PC-3 (cell line): ENCODE measurements at regions of chr5 and their contacts with region 1.

Region 1: GRCh38 chr5:90529194-90529938 is at the start of gene LYSMD3:
- DNase-seq: peak; percentile 99
- ATAC-seq: peak; percentile 90
- H3K4me3 ChIP-seq: peak within 1 kb of the TSS; percentile 85
- H3K27ac ChIP-seq: peak within 1 kb of the TSS; percentile 65
- H3K4me1 ChIP-seq: peaks cover 35% of the 10 kb centered on the region
- H3K27me3 ChIP-seq: no peaks in the 10 kb centered on the region
- CTCF ChIP-seq: no peak
- total RNA-seq, gene LYSMD3: 7.9 and 10.0 TPM in 2 replicates

Region 2: DNA sequence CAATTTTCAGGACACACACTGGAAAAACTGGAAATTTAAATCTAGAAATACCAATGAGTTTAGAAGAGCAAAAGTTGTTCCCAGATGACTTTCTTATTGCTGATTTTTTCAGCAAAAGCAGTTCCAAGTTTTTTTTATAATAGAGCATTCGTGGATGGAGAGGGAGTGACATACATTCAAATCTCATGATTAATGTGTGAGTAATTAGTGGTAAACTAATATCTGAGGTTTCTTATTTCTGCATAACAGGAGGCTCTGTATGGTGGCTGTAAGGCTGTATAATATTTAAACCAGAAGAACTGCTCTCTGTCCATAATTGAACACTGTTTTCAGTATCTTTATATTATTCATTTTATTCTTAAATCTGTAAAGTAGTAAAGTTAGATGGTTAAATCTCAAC is 25.8 kb before region 1 on chr5:
- CTCF ChIA-PET with region 1: interaction called, 4 read pairs
- POLR2A ChIA-PET with region 1: no interaction called
- intact Hi-C with region 1: loop called (anchors 1 kb)
- DNase-seq: peak; percentile 65
- ATAC-seq: peak; percentile 81
- H3K4me3 ChIP-seq: peak overlapping the region; percentile 34
- H3K27ac ChIP-seq: peak overlapping the region; percentile 67
- H3K4me1 ChIP-seq: peaks cover 35% of the 10 kb centered on the region
- H3K27me3 ChIP-seq: no peaks in the 10 kb centered on the region
- CTCF ChIP-seq: no peak

Region 3: GRCh38 chr5:90548069-90548593 is 18.8 kb after region 1 on chr5:
- CTCF ChIA-PET with region 1: interaction called, 3 read pairs
- POLR2A ChIA-PET with region 1: no interaction called
- intact Hi-C with region 1: loop called (anchors 1 kb)
- DNase-seq: peak; percentile 98
- ATAC-seq: peak; percentile 92
- H3K4me3 ChIP-seq: peak overlapping the region; percentile 49
- H3K27ac ChIP-seq: peak overlapping the region; percentile 70
- H3K4me1 ChIP-seq: peaks cover 37% of the 10 kb centered on the region
- H3K27me3 ChIP-seq: no peaks in the 10 kb centered on the region
- CTCF ChIP-seq: no peak

Region 4: DNA sequence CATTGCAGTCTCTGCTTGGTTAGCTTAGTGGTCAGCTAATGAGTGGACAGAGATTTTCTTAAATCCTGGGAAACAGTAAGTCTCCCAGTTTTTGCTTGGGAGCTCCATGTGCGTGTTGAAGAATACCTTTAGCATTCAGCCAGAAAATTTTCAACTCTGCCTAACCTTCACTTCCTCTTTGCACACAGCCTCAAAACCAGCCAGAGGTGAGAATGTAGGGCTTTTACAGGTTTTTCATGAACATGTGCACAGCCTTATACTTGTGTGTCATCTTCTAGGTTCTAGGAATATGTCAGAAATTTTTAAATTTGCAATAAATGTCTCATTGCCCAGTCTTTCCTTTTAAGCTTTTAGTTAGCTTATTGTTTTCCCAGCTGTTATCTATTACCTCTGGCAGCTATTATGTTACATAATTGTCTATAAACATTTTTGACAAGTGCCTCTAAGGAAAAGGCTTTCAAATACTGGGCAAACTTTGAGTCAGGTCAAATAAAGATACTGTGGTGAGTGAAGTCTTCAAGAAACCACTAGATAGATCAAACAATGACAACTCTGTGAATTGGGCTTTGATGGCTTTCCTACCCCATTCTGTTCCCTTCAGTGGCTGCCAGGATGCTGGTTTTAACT is 41.9 kb after region 1 on chr5:
- CTCF ChIA-PET with region 1: interaction called, 5 read pairs
- POLR2A ChIA-PET with region 1: no interaction called
- intact Hi-C with region 1: loop called (anchors 1 kb)
- DNase-seq: peak; percentile 86
- ATAC-seq: peak; percentile 96
- H3K4me3 ChIP-seq: no peak overlapping the region
- H3K27ac ChIP-seq: peak overlapping the region; percentile 68
- H3K4me1 ChIP-seq: peaks cover 26% of the 10 kb centered on the region
- H3K27me3 ChIP-seq: no peaks in the 10 kb centered on the region
- CTCF ChIP-seq: no peak

Region 5: DNA sequence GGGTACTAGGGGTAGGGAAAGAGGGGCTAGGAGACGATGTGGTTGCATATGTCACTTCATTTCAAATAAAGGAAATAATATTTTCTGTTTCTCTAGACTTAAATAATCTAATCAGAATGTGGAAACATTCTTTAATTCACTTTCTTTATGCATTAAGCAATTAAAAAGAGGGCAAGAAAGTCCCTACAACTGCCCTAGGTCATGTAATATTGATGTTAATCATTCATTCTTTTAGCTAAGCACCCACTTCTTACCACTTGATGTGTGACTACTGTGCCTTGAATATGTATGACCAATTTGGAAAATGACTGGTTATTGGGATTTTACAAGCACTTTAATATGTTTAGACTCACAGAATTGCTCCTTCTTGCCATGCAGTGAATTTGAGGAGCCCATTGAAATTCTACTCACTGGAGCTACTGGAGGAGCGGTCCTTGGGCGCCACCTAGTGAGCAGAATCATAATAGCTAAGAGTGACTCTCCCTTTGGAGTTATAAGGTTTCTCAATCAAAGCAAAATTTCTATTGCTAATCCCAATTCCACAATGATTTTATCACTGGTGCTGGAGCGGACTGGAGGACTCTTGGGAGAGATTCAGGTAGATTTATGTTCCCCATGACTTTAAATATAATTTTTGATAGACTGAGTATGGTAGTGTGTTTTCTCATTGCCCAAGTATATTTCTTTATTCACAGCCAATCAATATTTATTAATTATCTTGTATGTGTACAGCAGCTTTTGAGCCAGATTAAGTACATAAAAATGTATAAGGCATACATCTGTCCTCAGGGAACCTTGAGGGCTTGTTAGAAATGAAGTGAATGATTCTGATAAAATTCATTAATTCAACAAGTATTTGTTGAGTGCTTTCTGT is 254.3 kb after region 1 on chr5:
- CTCF ChIA-PET with region 1: interaction called, 5 read pairs
- POLR2A ChIA-PET with region 1: no interaction called
- intact Hi-C with region 1: loop called (anchors 5 kb)
- DNase-seq: peak; percentile 89
- ATAC-seq: peak; percentile 98
- H3K4me3 ChIP-seq: no peak overlapping the region
- H3K27ac ChIP-seq: no peak overlapping the region
- H3K4me1 ChIP-seq: no peaks in the 10 kb centered on the region
- H3K27me3 ChIP-seq: no peaks in the 10 kb centered on the region
- CTCF ChIP-seq: peak; percentile 98